Posterior vena cava (tissue), 2 donors: ENCODE measurements at regions of chr18 and their contacts with region 1.

Region 1: DNA sequence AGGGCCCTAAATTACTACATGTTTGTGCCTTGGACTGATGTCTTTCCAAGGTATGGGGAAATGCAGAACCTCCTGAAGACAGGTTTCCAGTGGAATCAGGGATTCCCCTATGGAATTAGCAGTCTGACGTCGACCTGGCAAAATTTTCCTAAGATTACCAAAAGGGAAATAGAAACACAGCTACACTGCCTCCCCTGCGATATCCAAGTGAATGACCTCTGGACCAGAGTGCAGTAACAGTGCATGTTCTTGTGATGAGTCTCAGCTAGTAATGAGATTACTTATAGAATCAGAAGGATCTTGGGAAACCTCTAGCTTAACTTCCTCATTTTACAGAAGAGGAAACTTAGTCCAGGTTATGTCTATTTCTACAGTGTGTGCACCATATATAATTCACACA is 21.3 kb upstream of the CHST9 start:
- DNase-seq: no peak

Region 2: GRCh38 chr18:27185025-27185763 is 21.2 kb before region 1 on chr18 and contains the start of gene CHST9:
- intact Hi-C with region 1: no loop called
- DNase-seq: peak; percentile 44
- total RNA-seq, gene CHST9: 0.14 TPM in 1 of 2 donors, not detected in the other

Region 3: GRCh38 chr18:27223570-27224291 is 17.3 kb after region 1 on chr18:
- intact Hi-C with region 1: loop called in 1 of 2 experiments (anchors 1 kb)
- DNase-seq: no peak